Heart left ventricle (tissue), 16 donors: ENCODE measurements at regions of chr11 and their contacts with region 1.

Region 1: GRCh38 chr11:90113541-90113940 is 20.9 kb upstream of the NAALAD2 start:
- DNase-seq: no peak
- ATAC-seq: no peak
- H3K4me3 ChIP-seq: no peak overlapping the region
- H3K27ac ChIP-seq: no peak overlapping the region
- H3K4me1 ChIP-seq: no peaks in the 10 kb centered on the region
- H3K27me3 ChIP-seq: no peaks in the 10 kb centered on the region
- CTCF ChIP-seq: peak in 11 of 12 donors; percentile 7 to 55 (median 32)
- POLR2A ChIP-seq: no peak

Region 2: GRCh38 chr11:89667001-89667400 is 446.5 kb before region 1 on chr11:
- intact Hi-C with region 1: loop called in 1 of 10 experiments (anchors 10 kb)
- DNase-seq: no peak
- ATAC-seq: no peak
- H3K4me3 ChIP-seq: no peak overlapping the region
- H3K27ac ChIP-seq: no peak overlapping the region
- H3K4me1 ChIP-seq: no peaks in the 10 kb centered on the region
- H3K27me3 ChIP-seq: no peaks in the 10 kb centered on the region
- CTCF ChIP-seq: no peak
- POLR2A ChIP-seq: no peak